Cardiac septum (tissue), 1 donor: ENCODE measurements at regions of chr4 and their contacts with region 1.

Region 1: GRCh38 chr4:18366892-18367291 is 345.3 kb upstream of the LCORL start:
- DNase-seq: no peak

Region 2: GRCh38 chr4:17817020-17817419 is 549.9 kb before region 1 on chr4:
- intact Hi-C with region 1: loop called (anchors 5 kb)
- DNase-seq: no peak

Region 3: DNA sequence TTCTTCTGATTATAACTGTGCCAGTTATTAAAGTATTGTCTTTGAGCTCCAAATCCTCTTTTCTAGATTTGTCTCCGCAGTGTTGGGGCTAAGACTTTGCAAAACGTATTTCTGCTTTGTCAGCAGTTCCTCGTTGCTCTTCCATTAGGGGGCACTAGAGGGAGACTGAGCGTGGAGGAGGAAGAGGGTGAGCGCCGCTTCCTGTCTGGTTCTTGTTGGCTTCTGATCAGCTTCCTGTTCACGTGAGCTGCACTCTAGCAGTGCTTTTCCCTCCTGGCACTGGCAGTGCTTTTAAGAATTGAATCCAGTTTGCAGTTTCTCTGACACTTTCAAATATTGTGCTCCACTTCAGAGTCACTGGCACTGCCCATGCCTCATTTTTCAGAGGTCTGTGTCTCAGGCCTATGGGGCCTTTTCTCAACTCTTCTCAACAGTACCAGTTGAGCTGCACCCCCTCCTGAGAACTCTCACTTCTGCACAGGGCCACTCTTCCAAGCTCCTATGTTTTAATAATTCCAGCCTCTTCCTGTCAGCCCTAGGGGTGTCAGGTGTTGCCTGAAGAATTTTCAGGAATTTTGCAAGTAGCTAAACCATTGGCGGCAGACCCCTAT is 291.0 kb before region 1 on chr4:
- intact Hi-C with region 1: loop called (anchors 10 kb)
- DNase-seq: no peak

Region 4: DNA sequence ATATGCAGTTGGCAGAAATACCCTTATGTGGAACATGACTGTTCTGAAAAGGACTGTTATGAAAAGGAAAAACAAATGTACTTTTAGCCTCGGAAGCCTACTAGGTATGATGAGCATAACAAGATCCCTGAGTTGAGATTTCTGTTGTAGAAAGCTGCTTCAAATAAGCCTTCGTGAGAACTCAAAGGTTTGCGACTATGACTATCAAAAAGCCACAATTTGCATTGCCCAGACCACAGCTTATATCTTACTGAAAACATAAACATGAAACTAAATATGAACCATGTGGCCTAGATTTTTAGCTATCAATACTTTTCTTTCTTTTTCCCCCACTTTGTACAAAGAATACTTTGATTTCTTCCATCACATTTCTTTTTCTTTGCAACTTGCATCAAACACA is 52.9 kb after region 1 on chr4:
- intact Hi-C with region 1: no loop called
- DNase-seq: no peak